Mammary epithelial cell (primary cell): ENCODE measurements at regions of chr10 and their contacts with region 1.

Region 1: GRCh38 chr10:21278491-21279239 is 246.8 kb downstream of the SKIDA1 start:
- DNase-seq: peak; percentile 78
- H3K4me3 ChIP-seq: no peak overlapping the region
- H3K27ac ChIP-seq: no peak overlapping the region
- H3K4me1 ChIP-seq: peaks cover 4% of the 10 kb centered on the region
- H3K27me3 ChIP-seq: no peaks in the 10 kb centered on the region
- CTCF ChIP-seq: peak; percentile 66 to 84

Region 2: DNA sequence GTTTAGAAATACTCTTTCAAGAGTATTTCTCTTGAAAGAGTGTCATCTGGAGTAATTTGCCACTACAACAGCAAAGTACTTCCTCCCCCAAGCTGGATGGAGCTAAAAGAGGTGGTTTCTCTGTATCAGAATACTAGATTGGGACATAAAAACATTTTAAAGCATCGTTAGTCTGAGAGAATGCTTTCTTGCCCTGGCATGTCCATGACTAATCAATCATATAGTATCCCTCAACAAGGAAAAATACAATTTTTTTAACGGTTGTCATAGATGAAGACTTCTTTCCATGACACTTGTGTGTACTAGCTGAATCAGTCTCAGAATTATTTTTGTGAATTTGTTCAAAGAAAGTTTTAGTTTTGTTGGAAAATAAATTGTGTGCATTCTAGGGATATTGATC is 619.4 kb before region 1 on chr10:
- CTCF ChIA-PET with region 1: no interaction called
- dilution Hi-C with region 1: no loop called
- in situ Hi-C with region 1: no loop called
- intact Hi-C with region 1: no loop called
- DNase-seq: peak; percentile 79
- H3K4me3 ChIP-seq: no peak overlapping the region
- H3K27ac ChIP-seq: peak overlapping the region; percentile 18
- H3K4me1 ChIP-seq: peaks cover 7% of the 10 kb centered on the region
- H3K27me3 ChIP-seq: no peaks in the 10 kb centered on the region
- CTCF ChIP-seq: no peak

Region 3: GRCh38 chr10:21364196-21365114 is 85.8 kb after region 1 on chr10:
- CTCF ChIA-PET with region 1: no interaction called
- dilution Hi-C with region 1: no loop called
- in situ Hi-C with region 1: no loop called
- intact Hi-C with region 1: loop called (anchors 5 kb)
- DNase-seq: peak; percentile 89
- H3K4me3 ChIP-seq: no peak overlapping the region
- H3K27ac ChIP-seq: peak overlapping the region; percentile 90
- H3K4me1 ChIP-seq: peaks cover 37% of the 10 kb centered on the region
- H3K27me3 ChIP-seq: no peaks in the 10 kb centered on the region
- CTCF ChIP-seq: no peak

Region 4: GRCh38 chr10:21516242-21517131 is 237.8 kb after region 1 on chr10:
- CTCF ChIA-PET with region 1: no interaction called
- dilution Hi-C with region 1: no loop called
- in situ Hi-C with region 1: no loop called
- intact Hi-C with region 1: loop called (anchors 5 kb)
- DNase-seq: peak; percentile 56
- H3K4me3 ChIP-seq: peak overlapping the region; percentile 44 to 68 (median 67)
- H3K27ac ChIP-seq: no peak overlapping the region
- H3K4me1 ChIP-seq: peaks cover 18% of the 10 kb centered on the region
- H3K27me3 ChIP-seq: no peaks in the 10 kb centered on the region
- CTCF ChIP-seq: no peak

Region 5: DNA sequence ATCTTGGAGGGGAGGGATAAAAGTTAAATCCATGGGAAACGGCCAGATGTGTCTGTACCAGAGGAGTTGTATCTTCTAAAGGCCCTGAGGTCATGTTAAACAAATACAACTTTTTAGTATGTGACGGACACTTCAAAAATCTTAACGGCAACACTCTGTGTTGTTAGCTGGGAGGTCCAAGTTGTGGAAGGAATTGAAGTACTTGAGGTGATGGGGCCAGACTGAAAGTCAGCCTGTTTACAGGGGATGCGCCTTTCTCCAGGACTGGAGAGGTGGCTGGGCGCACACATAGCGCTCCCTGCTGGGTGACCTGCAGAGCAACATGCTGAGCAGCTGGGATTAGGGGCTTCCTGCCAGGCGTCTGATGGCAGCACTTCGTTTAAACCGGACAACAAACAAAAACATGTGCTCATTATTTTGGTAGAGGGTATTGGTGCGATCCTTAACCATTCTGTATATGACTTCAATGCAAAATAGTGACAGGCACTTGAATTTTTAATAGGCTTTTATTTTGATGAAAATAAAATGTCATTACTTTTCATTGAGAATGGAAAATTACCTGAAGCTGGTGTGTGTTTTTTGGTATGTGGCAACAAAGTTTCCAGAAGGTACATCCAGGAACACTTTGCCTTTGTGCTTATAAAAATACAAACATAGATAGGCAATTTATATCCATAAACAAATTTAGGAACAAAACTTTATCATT is 453.6 kb after region 1 on chr10:
- CTCF ChIA-PET with region 1: no interaction called
- dilution Hi-C with region 1: no loop called
- in situ Hi-C with region 1: loop called in 1 of 2 experiments (anchors 25 kb)
- intact Hi-C with region 1: loop called (anchors 5 kb)
- DNase-seq: no peak
- H3K4me3 ChIP-seq: no peak overlapping the region
- H3K27ac ChIP-seq: no peak overlapping the region
- H3K4me1 ChIP-seq: peaks cover 6% of the 10 kb centered on the region
- H3K27me3 ChIP-seq: no peaks in the 10 kb centered on the region
- CTCF ChIP-seq: peak; percentile 55 to 57

Region 6: GRCh38 chr10:21953585-21954057 is 675.0 kb after region 1 on chr10:
- CTCF ChIA-PET with region 1: no interaction called
- dilution Hi-C with region 1: no loop called
- in situ Hi-C with region 1: loop called (anchors 25 kb)
- intact Hi-C with region 1: loop called (anchors 1 kb)
- DNase-seq: peak; percentile 64
- H3K4me3 ChIP-seq: no peak overlapping the region
- H3K27ac ChIP-seq: no peak overlapping the region
- H3K4me1 ChIP-seq: no peaks in the 10 kb centered on the region
- H3K27me3 ChIP-seq: no peaks in the 10 kb centered on the region
- CTCF ChIP-seq: peak; percentile 38 to 61